ENCODE measurements at regions of chr10 and their contacts with region 1.

Region 1: GRCh38 chr10:98045785-98046389 is 15.5 kb upstream of the CRTAC1 start:
- DNase-seq: peak; percentile 80
- ATAC-seq: peak; percentile 96
- H3K4me3 Mint-ChIP-seq: no peak overlapping the region
- H3K27ac Mint-ChIP-seq: no peak overlapping the region
- H3K4me1 Mint-ChIP-seq: no peaks in the 10 kb centered on the region
- H3K27me3 Mint-ChIP-seq: peaks cover 24% of the 10 kb centered on the region

Region 2: GRCh38 chr10:97701438-97702069 is 344.3 kb before region 1 on chr10:
- CTCF ChIA-PET with region 1: interaction called, 7 read pairs
- POLR2A ChIA-PET with region 1: no interaction called
- intact Hi-C with region 1: loop called in 1 of 2 experiments (anchors 5 kb)
- DNase-seq: peak; percentile 67
- ATAC-seq: peak; percentile 99
- H3K4me3 Mint-ChIP-seq: no peak overlapping the region
- H3K27ac Mint-ChIP-seq: no peak overlapping the region
- H3K4me1 Mint-ChIP-seq: no peaks in the 10 kb centered on the region
- H3K27me3 Mint-ChIP-seq: peaks cover 6% of the 10 kb centered on the region

Region 3: GRCh38 chr10:97759158-97759887 is 286.6 kb before region 1 on chr10:
- CTCF ChIA-PET with region 1: no interaction called
- POLR2A ChIA-PET with region 1: no interaction called
- intact Hi-C with region 1: loop called in 1 of 2 experiments (anchors 1 kb)
- DNase-seq: peak; percentile 73
- ATAC-seq: peak; percentile 72
- H3K4me3 Mint-ChIP-seq: no peak overlapping the region
- H3K27ac Mint-ChIP-seq: no peak overlapping the region
- H3K4me1 Mint-ChIP-seq: no peaks in the 10 kb centered on the region
- H3K27me3 Mint-ChIP-seq: no peaks in the 10 kb centered on the region

Region 4: GRCh38 chr10:97792141-97792721 is 253.7 kb before region 1 on chr10:
- CTCF ChIA-PET with region 1: interaction called, 4 read pairs
- POLR2A ChIA-PET with region 1: no interaction called
- intact Hi-C with region 1: loop called in 1 of 2 experiments (anchors 5 kb)
- DNase-seq: peak; percentile 85
- ATAC-seq: peak; percentile 81
- H3K4me3 Mint-ChIP-seq: no peak overlapping the region
- H3K27ac Mint-ChIP-seq: no peak overlapping the region
- H3K4me1 Mint-ChIP-seq: peaks cover 19% of the 10 kb centered on the region
- H3K27me3 Mint-ChIP-seq: no peaks in the 10 kb centered on the region

Region 5: GRCh38 chr10:97991871-97992270 is 54.0 kb before region 1 on chr10:
- CTCF ChIA-PET with region 1: no interaction called
- POLR2A ChIA-PET with region 1: no interaction called
- intact Hi-C with region 1: no loop called
- DNase-seq: no peak
- ATAC-seq: no peak
- H3K4me3 Mint-ChIP-seq: no peak overlapping the region
- H3K27ac Mint-ChIP-seq: no peak overlapping the region
- H3K4me1 Mint-ChIP-seq: no peaks in the 10 kb centered on the region
- H3K27me3 Mint-ChIP-seq: peaks cover 17% of the 10 kb centered on the region

Region 6: DNA sequence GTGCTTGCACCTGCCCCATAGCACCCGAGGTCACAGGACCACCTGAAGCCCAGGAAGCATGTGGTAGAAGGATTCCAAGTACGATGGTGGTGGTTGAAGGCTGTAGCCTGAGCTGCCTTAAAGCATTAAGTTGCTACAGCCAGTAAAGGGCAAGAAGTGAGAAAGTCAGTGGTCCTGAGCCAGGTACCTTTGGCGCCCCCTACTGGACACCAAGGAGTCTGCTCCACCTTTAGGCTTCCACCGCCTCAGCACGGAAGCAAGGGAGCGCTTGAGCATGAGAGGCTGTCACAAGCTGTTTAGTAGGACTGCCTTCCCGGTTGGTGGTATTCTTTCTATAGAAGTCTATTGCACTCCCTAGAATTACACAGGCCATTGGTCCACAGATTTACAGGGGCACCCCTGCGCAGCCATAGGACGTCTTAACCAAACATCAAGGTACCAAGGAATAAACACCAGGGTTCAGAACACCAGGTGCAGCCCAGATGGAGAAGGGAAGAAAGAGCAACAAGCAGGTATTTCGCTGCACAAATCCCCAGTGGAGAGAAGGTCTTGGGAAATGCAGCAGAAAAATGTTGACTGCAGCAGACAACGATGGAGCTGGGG is 17.6 kb before region 1 on chr10:
- CTCF ChIA-PET with region 1: interaction called, 21 read pairs
- POLR2A ChIA-PET with region 1: interaction called, 3 read pairs
- intact Hi-C with region 1: no loop called
- DNase-seq: peak; percentile 85
- ATAC-seq: peak; percentile 92
- H3K4me3 Mint-ChIP-seq: no peak overlapping the region
- H3K27ac Mint-ChIP-seq: no peak overlapping the region
- H3K4me1 Mint-ChIP-seq: peaks cover 3% of the 10 kb centered on the region
- H3K27me3 Mint-ChIP-seq: peaks cover 39% of the 10 kb centered on the region

Region 7: GRCh38 chr10:98134431-98135221 is 88.7 kb after region 1 on chr10 and contains the start of gene R3HCC1L:
- CTCF ChIA-PET with region 1: no interaction called
- POLR2A ChIA-PET with region 1: interaction called, 12 read pairs
- intact Hi-C with region 1: no loop called
- DNase-seq: peak; percentile 97
- ATAC-seq: peak; percentile 95
- H3K4me3 Mint-ChIP-seq: peak within 1 kb of the TSS; percentile 86
- H3K27ac Mint-ChIP-seq: peak within 1 kb of the TSS; percentile 93
- H3K4me1 Mint-ChIP-seq: peaks cover 44% of the 10 kb centered on the region
- H3K27me3 Mint-ChIP-seq: no peaks in the 10 kb centered on the region
- total RNA-seq, gene R3HCC1L: 13.5 to 16.8 TPM

Measured in activated CD4-positive, alpha-beta T cell treated with anti-CD3 and anti-CD28 coated beads for 36 hours (primary cell).